ENCODE measurements at regions of chr20 and their contacts with region 1.

Region 1: DNA sequence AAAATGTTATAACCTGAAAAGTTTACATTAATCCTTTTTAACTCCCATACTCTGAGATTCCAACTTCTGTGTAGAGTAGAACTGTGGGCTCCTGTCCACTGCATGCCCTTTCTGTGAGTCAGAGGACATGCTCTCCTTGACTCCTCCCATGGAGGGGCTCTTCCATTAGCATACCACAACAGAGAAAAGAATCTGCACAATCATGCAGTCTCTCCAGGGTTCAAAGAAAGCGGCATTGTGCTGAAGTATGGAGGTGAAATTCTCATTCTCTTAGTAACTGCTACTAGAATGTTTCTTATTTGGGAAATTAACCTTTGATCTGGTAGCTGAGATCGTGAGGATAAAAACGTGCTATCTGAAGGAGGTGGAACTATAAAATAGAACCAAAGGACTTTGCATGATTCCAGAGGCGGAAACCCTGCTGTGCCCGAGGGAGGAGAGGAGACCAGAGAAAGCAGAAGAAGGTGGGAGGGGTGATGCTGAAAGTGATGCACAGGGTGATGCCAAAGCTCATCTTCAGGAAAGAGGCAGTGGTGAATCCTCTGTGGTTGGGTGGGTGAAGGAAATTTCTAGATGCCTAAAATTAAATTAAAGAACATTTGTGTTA is 202.2 kb upstream of the PCSK2 start:
- DNase-seq: peak; percentile 42
- ATAC-seq: peak; percentile 94
- H3K4me3 ChIP-seq: peak overlapping the region in 1 of 2 experiments; percentile 30; a peak in 2 of 4 replicates
- H3K27ac ChIP-seq: no peak overlapping the region
- H3K4me1 ChIP-seq: peaks cover 0 to 39% of the 10 kb centered on the region in 2 experiments; a peak in 2 of 4 replicates
- H3K27me3 ChIP-seq: no peaks in the 10 kb centered on the region
- CTCF ChIP-seq: no peak
- POLR2A ChIP-seq: no peak
- RAD21 ChIP-seq: no peak

Region 2: GRCh38 chr20:16966276-16966880 is 58.2 kb before region 1 on chr20:
- CTCF ChIA-PET with region 1: no interaction called
- POLR2A ChIA-PET with region 1: no interaction called
- RAD21 ChIA-PET with region 1: no interaction called
- intact Hi-C with region 1: loop called (anchors 10 kb)
- DNase-seq: no peak
- ATAC-seq: no peak
- H3K4me3 ChIP-seq: no peak overlapping the region
- H3K27ac ChIP-seq: no peak overlapping the region
- H3K4me1 ChIP-seq: no peaks in the 10 kb centered on the region
- H3K27me3 ChIP-seq: 0 out of 2 replicates have a peak, but pooled peaks cover 6% of the 10 kb centered on the region
- CTCF ChIP-seq: no peak
- POLR2A ChIP-seq: no peak
- RAD21 ChIP-seq: no peak

Region 3: GRCh38 chr20:17129089-17129488 is 104.5 kb after region 1 on chr20:
- CTCF ChIA-PET with region 1: no interaction called
- POLR2A ChIA-PET with region 1: no interaction called
- RAD21 ChIA-PET with region 1: no interaction called
- intact Hi-C with region 1: no loop called
- DNase-seq: no peak
- ATAC-seq: no peak
- H3K4me3 ChIP-seq: no peak overlapping the region
- H3K27ac ChIP-seq: no peak overlapping the region
- H3K4me1 ChIP-seq: no peaks in the 10 kb centered on the region
- H3K27me3 ChIP-seq: peaks cover 8% of the 10 kb centered on the region; the same call in 1 of the 2 replicates
- CTCF ChIP-seq: no peak
- POLR2A ChIP-seq: no peak
- RAD21 ChIP-seq: no peak

Region 4: GRCh38 chr20:17281478-17281877 is 256.9 kb after region 1 on chr20:
- CTCF ChIA-PET with region 1: no interaction called
- POLR2A ChIA-PET with region 1: no interaction called
- RAD21 ChIA-PET with region 1: no interaction called
- intact Hi-C with region 1: no loop called
- DNase-seq: peak; percentile 3
- ATAC-seq: 0 out of 2 replicates have a peak, but pooled peaks have one; percentile 57
- H3K4me3 ChIP-seq: no peak overlapping the region
- H3K27ac ChIP-seq: no peak overlapping the region
- H3K4me1 ChIP-seq: no peaks in the 10 kb centered on the region
- H3K27me3 ChIP-seq: peaks cover 22% of the 10 kb centered on the region
- CTCF ChIP-seq: peak in 2 of 3 experiments; percentile 33 to 47; a peak in 3 of 6 replicates
- POLR2A ChIP-seq: no peak
- RAD21 ChIP-seq: 0 out of 2 replicates have a peak, but pooled peaks have one; percentile 16

Measured in HCT116 (cell line).